Heart left ventricle (tissue), 16 donors: ENCODE measurements at regions of chr22 and their contacts with region 1.

Region 1: GRCh38 chr22:48492366-48493320 is 1335.0 kb downstream of the BRD1 start:
- DNase-seq: peak in 3 of 5 donors; percentile 37 to 66 (median 45)
- ATAC-seq: peak; percentile 57 to 85 (median 66)
- H3K4me3 ChIP-seq: no peak overlapping the region
- H3K27ac ChIP-seq: no peak overlapping the region
- H3K4me1 ChIP-seq: peaks cover 0 to 15% (median 4%) of the 10 kb centered on the region in 12 donors
- H3K27me3 ChIP-seq: peaks cover 28 to 75% (median 46%) of the 10 kb centered on the region in 9 donors
- CTCF ChIP-seq: peak; percentile 42 to 73 (median 64)
- POLR2A ChIP-seq: no peak

Region 2: DNA sequence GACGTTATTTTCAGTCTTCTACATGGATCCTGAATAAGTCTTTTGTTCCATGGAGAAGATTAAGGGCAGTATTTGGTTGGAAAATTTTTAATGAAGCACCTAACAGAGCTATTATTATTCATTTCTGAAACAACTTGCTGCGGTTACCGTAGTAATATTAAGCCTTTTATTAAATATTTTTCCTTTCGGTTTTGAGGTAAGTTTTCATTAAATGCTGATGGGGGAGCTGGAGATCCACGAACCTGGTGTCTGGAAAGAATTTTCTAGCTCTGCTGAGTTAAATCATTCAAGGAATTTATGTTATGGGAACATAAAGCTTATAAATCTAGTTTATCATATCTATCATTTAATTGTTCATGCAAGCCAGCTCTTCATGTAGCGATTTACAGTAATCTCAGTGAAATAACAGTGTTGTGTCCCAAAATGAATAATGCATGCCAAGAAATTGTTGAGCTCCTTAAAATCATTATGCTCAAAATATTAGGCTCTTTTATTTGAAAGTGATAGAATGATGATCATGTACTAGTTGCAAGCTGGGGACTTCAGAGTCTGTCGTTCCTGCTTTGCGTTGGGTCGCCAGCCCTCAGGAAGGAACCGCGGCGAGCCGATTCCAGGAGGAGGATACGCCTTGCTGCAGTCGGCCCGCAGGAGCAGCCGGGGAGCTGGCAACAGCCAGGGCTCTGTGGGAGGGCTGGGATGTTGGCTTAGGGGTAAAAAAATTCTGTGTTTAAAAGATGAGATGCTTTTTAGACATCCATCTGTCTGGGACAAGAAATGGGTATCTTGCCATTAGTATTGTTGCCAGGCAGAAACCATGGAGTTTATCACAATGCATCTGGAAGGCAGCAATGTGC is 1647.1 kb before region 1 on chr22:
- intact Hi-C with region 1: loop called in 3 of 10 experiments (anchors 5 to 10 kb)
- DNase-seq: no peak
- ATAC-seq: peak in 2 of 4 donors; percentile 28 to 58
- H3K4me3 ChIP-seq: peak overlapping the region in 9 of 12 donors; percentile 3 to 52 (median 39)
- H3K27ac ChIP-seq: peak overlapping the region in 4 of 12 donors; percentile 2 to 50 (median 24)
- H3K4me1 ChIP-seq: peaks cover 0 to 19% (median 0%) of the 10 kb centered on the region in 12 donors
- H3K27me3 ChIP-seq: no peaks in the 10 kb centered on the region
- CTCF ChIP-seq: peak; percentile 9 to 66 (median 52)
- POLR2A ChIP-seq: no peak

Region 3: DNA sequence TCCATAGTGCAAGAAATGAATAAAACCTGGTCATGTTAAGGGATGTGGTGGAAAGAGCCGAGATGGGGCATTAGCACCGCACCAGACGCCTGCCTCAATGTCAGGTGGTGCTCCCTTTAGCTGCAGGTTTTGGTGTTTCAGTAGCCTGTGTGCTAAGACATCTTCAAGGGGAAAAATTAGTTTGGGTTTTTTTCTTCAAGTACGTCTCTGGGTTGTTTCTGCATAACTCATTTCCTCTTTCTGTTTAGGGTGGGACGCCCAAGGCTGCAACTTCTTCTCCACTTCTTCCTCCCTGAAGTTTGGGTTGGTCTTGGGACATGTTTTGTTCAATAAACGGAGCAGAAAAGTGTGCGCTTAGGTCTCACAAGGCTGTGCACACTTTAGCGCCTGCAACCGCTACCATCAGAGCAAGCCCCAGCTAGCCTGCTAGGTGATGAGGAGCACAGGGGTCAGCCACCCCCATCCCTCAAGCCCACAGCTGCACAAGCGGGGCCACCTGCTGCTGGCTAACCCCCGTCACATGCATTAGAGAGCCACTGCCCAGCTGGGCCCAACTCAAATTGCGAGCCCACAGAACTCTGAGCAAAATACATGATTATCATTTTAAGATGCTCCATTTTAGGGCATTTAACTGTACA is 234.5 kb before region 1 on chr22:
- intact Hi-C with region 1: no loop called
- DNase-seq: no peak
- ATAC-seq: no peak
- H3K4me3 ChIP-seq: no peak overlapping the region
- H3K27ac ChIP-seq: no peak overlapping the region
- H3K4me1 ChIP-seq: no peaks in the 10 kb centered on the region
- H3K27me3 ChIP-seq: peaks cover 0 to 38% (median 4%) of the 10 kb centered on the region in 9 donors
- CTCF ChIP-seq: no peak
- POLR2A ChIP-seq: no peak